SK-N-SH (cell line): ENCODE measurements at regions of chr13 and their contacts with region 1.

Region 1: GRCh38 chr13:27953676-27954405 is 15.3 kb downstream of the CDX2 start:
- DNase-seq: peak; percentile 90
- H3K4me3 ChIP-seq: peak overlapping the region; percentile 24 to 45; a peak in 2 of 4 replicates
- H3K27ac ChIP-seq: no peak overlapping the region
- H3K4me1 ChIP-seq: no peaks in the 10 kb centered on the region
- H3K27me3 ChIP-seq: peaks cover 41% of the 10 kb centered on the region
- CTCF ChIP-seq: peak; percentile 72
- EP300 ChIP-seq: no peak
- RAD21 ChIP-seq: peak; percentile 64

Region 2: DNA sequence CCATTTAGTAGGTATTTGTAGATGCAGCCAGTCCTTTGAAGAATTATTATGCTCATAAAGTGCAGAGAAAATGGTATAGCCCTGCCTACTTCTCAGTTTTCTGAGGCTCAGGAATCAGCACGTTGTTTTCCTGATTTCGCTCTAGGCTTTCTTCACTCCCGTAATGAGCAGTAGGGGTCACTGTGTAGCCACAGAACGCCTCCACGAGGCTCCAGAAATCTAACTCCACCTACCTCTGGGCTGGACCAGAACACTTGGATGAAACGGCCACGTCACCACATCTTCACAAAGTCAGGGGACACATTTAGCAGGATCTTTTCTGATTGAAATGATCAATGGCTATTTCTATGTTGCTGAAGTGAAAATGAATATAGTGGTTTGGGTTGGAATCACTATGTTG is 579.2 kb before region 1 on chr13:
- CTCF ChIA-PET with region 1: interaction called, 17 read pairs
- POLR2A ChIA-PET with region 1: no interaction called
- DNase-seq: peak; percentile 75
- H3K4me3 ChIP-seq: no peak overlapping the region; a peak in 1 of 4 replicates
- H3K27ac ChIP-seq: no peak overlapping the region
- H3K4me1 ChIP-seq: no peaks in the 10 kb centered on the region
- H3K27me3 ChIP-seq: peaks cover 62% of the 10 kb centered on the region
- CTCF ChIP-seq: peak; percentile 75
- EP300 ChIP-seq: no peak
- RAD21 ChIP-seq: peak; percentile 82

Region 3: GRCh38 chr13:27868641-27869435 is 85.0 kb before region 1 on chr13:
- CTCF ChIA-PET with region 1: interaction called, 19 read pairs
- POLR2A ChIA-PET with region 1: no interaction called
- DNase-seq: no peak
- H3K4me3 ChIP-seq: no peak overlapping the region
- H3K27ac ChIP-seq: no peak overlapping the region
- H3K4me1 ChIP-seq: no peaks in the 10 kb centered on the region
- H3K27me3 ChIP-seq: peaks cover 11% of the 10 kb centered on the region; the same call in 1 of the 2 replicates
- CTCF ChIP-seq: peak; percentile 62
- EP300 ChIP-seq: no peak
- RAD21 ChIP-seq: no peak

Region 4: DNA sequence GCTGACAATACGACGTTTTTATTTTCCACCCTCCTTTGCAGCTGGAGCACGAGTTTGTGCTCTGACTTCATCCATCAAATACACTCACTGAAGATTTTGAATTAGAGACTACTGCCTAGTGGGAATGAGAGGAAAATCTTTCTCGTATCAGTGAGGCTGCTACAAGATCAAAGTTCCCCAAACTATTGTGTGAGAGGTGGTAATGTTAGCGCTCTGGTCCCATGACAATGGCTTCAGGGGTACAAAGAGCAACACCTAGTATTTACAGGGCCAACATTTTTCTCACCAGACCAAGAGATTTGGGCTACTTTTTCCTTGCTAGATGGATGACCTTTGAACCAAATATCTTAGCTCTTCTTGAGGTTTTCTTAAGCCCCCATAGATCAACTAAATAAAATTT is 64.4 kb before region 1 on chr13:
- CTCF ChIA-PET with region 1: no interaction called
- POLR2A ChIA-PET with region 1: no interaction called
- DNase-seq: no peak
- H3K4me3 ChIP-seq: no peak overlapping the region
- H3K27ac ChIP-seq: no peak overlapping the region
- H3K4me1 ChIP-seq: no peaks in the 10 kb centered on the region
- H3K27me3 ChIP-seq: peaks cover 5% of the 10 kb centered on the region; the same call in 1 of the 2 replicates
- CTCF ChIP-seq: no peak
- EP300 ChIP-seq: no peak
- RAD21 ChIP-seq: no peak

Region 5: GRCh38 chr13:27919934-27920676 is 33.7 kb before region 1 on chr13 and contains the start of gene PDX1:
- CTCF ChIA-PET with region 1: interaction called, 12 read pairs
- POLR2A ChIA-PET with region 1: no interaction called
- DNase-seq: peak; percentile 70
- H3K4me3 ChIP-seq: peak within 1 kb of the TSS in 1 of 2 experiments; percentile 50; a peak in 1 of 4 replicates
- H3K27ac ChIP-seq: no peak within 1 kb of the TSS
- H3K4me1 ChIP-seq: no peaks in the 10 kb centered on the region
- H3K27me3 ChIP-seq: peaks cover 95% of the 10 kb centered on the region
- CTCF ChIP-seq: no peak
- EP300 ChIP-seq: no peak
- RAD21 ChIP-seq: no peak
- polyA plus RNA-seq, gene PDX1: not detected in 2 replicates

Region 6: DNA sequence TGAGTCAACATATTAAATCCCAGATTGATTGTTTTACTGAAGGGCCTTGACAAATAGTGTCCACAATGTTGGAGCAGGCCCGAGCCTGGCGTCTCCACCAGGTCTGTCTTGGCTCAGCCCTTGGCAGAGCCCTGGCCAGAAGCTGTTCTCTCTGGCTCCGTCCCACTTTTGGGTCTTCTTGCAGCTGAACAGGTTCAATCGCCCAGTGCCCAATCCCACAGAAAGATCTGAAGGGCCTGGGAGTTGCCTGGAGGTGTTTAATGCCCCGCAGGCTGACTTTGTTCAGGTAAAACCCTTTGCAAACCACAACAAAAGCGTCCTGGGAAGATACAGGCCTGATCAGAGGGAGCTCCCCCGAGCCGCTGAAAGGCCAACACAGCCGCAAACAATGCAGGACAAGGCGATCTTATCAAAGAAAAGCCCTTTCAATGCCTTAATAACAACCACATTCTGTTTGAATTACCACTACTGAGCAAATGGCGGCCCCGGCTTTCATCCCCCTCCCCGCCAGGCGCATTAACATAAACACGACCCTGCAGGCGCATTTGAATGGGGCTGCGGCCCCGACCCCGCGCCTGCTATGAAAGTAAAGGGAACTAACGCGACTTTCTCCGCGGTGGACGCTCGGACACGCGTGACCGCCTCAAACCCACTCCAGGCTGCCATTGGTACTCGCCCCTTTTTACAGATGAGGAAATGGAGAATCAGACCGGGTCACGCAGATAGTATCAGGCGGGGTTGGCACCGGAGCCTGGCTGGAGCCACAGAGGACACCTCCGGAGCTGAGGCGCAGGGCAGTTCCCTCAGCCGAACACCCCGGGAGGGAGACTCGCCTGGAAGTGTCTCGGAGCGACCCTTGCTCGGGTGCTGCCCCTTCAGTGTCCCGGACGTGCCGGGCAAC is 12.1 kb after region 1 on chr13:
- CTCF ChIA-PET with region 1: interaction called, 13 read pairs
- POLR2A ChIA-PET with region 1: no interaction called
- DNase-seq: peak; percentile 64
- H3K4me3 ChIP-seq: no peak overlapping the region
- H3K27ac ChIP-seq: no peak overlapping the region
- H3K4me1 ChIP-seq: no peaks in the 10 kb centered on the region
- H3K27me3 ChIP-seq: peaks cover 86% of the 10 kb centered on the region
- CTCF ChIP-seq: no peak
- EP300 ChIP-seq: no peak
- RAD21 ChIP-seq: no peak

Region 7: DNA sequence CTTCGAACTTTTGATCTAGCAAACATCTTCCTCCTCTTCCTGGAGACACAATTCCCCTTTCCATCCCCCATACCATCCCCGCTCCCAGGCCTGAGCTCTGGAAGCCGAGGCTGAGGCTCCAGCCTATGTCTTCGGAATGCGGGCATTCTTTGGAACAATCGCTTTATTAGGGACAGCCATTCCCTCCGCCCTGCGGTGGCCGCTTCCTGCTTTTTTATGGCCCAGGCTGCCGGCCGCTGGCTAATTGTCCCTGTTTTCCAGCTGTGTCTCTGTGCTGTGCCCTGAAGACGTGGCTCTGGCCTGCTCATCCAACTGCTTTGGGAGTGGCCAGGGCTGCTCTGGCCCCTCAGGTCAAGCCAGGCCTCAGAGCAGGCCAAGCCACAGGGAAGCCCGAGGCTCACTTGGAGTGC is 17.4 kb after region 1 on chr13:
- CTCF ChIA-PET with region 1: interaction called, 13 read pairs
- POLR2A ChIA-PET with region 1: no interaction called
- DNase-seq: peak; percentile 12
- H3K4me3 ChIP-seq: no peak overlapping the region
- H3K27ac ChIP-seq: no peak overlapping the region
- H3K4me1 ChIP-seq: no peaks in the 10 kb centered on the region
- H3K27me3 ChIP-seq: peaks cover 99% of the 10 kb centered on the region
- CTCF ChIP-seq: no peak
- EP300 ChIP-seq: no peak
- RAD21 ChIP-seq: no peak

Region 8: DNA sequence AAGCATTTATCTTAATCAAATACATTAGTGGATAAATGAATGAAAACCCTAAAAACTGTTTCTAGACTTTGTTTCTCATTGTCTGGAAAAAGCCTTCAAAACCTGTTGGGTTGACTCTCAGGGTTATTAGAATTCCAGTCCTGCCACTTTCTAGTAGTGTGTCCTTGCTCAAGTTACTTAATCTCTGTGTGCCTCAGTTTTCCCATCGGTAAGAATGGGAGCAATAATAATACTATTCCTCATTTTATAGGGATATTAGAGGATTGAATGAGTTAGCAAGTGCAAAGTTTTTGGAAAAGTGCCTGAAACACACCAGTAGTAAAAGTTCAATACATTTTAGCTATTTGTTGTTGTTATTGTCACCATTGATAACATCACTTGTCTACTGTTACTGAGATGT is 31.8 kb after region 1 on chr13:
- CTCF ChIA-PET with region 1: interaction called, 20 read pairs
- POLR2A ChIA-PET with region 1: no interaction called
- DNase-seq: no peak
- H3K4me3 ChIP-seq: no peak overlapping the region
- H3K27ac ChIP-seq: no peak overlapping the region
- H3K4me1 ChIP-seq: no peaks in the 10 kb centered on the region
- H3K27me3 ChIP-seq: peaks cover 74% of the 10 kb centered on the region
- CTCF ChIP-seq: no peak
- EP300 ChIP-seq: no peak
- RAD21 ChIP-seq: no peak